Lower lobe of right lung (tissue), 2 donors: ENCODE measurements at regions of chr5 and their contacts with region 1.

Region 1: GRCh38 chr5:66814146-66814991 is 218.2 kb downstream of the MAST4 start:
- DNase-seq: no peak
- ATAC-seq: peak in 1 of 2 donors; percentile 67
- H3K4me3 ChIP-seq: no peak overlapping the region
- H3K27ac ChIP-seq: no peak overlapping the region
- H3K4me1 ChIP-seq: peaks cover 7% of the 10 kb centered on the region
- H3K27me3 ChIP-seq: no peaks in the 10 kb centered on the region
- CTCF ChIP-seq: peak; percentile 76

Region 2: DNA sequence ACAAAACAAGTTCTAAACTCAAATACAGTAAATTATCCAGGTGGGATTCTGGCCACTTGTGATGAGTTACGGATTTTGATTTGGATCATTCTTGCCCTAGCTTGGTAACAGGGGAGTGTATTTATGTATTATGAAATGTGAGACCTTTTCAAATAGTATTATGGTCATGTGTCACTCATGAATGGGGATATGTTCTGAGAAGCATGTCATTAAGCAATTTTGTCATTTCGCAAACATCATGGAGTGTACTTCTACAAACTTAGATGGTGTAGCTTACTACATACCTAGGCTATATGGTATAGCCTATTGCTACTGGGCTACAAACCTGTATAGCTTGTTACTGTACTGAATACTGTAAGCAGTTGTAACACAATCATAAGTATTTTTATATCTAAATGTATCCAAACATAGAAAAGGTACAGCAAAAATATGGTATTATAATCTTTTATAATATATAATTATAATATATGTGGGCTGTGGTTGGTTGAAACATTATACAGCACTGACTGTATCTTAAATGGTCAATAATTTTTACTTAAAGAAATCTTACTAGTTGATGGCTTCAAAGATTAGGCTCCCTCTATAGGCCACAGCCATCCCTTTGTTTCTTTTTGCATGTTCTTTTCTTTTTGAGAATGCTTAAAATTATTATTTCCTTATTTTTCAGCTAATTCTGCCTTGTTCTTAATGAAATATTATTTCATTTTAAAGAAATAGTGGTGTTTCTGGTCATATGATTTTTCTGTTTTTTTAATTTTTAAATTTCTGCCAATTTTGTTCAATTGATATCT is 89.8 kb before region 1 on chr5:
- intact Hi-C with region 1: no loop called
- DNase-seq: no peak
- ATAC-seq: peak; percentile 59 to 72
- H3K4me3 ChIP-seq: no peak overlapping the region
- H3K27ac ChIP-seq: no peak overlapping the region
- H3K4me1 ChIP-seq: peaks cover 7% of the 10 kb centered on the region
- H3K27me3 ChIP-seq: no peaks in the 10 kb centered on the region
- CTCF ChIP-seq: no peak

Region 3: GRCh38 chr5:66864331-66864840 is 50.0 kb after region 1 on chr5:
- intact Hi-C with region 1: loop called (anchors 10 kb)
- DNase-seq: no peak
- ATAC-seq: peak; percentile 46 to 58
- H3K4me3 ChIP-seq: no peak overlapping the region
- H3K27ac ChIP-seq: no peak overlapping the region
- H3K4me1 ChIP-seq: peaks cover 7% of the 10 kb centered on the region
- H3K27me3 ChIP-seq: no peaks in the 10 kb centered on the region
- CTCF ChIP-seq: peak; percentile 51